Right cardiac atrium (tissue), 5 donors: ENCODE measurements at regions of chr10 and their contacts with region 1.

Region 1: DNA sequence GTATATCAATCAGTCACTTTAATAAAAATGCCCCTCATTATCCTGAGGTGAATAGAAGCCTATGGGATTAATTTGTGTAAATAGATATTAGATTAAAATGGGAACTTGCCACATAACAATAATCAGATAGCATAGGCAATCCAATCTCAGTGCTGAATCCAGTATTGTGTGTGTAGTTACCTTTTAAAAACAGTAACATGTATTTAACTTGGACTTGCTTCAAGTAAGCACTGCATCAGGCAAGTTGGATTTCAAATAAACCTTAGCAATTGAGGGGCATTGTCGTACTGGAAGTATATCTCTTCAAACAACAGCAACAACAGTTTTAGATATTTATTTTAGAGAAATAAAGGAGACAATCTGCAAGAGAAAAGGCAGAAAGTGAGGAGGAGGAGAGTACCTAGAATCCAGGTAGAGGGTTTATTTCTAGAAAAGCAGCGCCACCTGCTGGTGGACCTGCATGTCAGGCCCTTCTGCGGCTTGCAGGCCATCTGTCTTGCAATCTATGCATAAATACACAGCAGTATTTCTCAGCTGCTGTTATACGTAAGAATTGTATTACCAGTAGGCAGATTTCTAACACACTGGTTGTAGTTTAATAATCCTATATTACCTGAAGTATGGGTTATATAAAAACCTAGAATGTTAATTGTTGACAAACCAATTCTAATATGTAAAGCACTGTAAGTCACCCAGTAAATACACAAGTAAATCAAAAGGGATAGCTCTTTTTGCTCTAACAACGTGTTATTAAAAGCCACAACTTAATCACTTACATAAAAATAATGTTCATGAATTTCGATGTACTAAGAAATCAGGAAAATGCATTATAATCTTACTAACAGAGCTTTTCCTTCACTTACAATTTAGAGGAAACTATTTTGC is 652.8 kb downstream of the KCNMA1 start:
- DNase-seq: peak; percentile 50 to 82 (median 76)
- ATAC-seq: peak; percentile 71 to 75
- H3K4me3 ChIP-seq: no peak overlapping the region
- H3K27ac ChIP-seq: no peak overlapping the region
- H3K4me1 ChIP-seq: no peaks in the 10 kb centered on the region
- H3K27me3 ChIP-seq: no peaks in the 10 kb centered on the region

Region 2: GRCh38 chr10:76547352-76547972 is 437.3 kb before region 1 on chr10:
- intact Hi-C with region 1: loop called in 2 of 4 experiments (anchors 5 to 10 kb)
- DNase-seq: peak; percentile 73 to 89 (median 82)
- ATAC-seq: peak; percentile 22 to 73
- H3K4me3 ChIP-seq: no peak overlapping the region
- H3K27ac ChIP-seq: no peak overlapping the region
- H3K4me1 ChIP-seq: no peaks in the 10 kb centered on the region
- H3K27me3 ChIP-seq: no peaks in the 10 kb centered on the region

Region 3: DNA sequence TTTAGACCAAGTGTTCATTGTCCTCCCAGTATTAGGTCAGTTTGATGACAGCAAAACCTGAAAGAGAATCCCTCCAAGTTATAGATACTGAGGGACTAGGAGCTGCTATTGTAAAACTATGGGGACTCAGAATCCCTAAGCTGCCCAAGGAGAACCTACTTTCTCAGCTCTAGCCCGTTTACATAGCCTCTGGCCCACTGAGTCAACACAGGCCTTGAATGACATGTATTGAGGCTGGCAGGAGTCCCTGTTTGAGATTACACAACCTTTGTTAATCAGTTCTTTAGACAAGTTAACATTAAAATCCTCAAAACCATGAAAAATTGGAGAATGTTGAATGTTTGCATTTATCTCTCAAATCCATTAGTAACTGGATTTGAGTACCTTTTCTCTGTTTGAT is 426.2 kb before region 1 on chr10:
- intact Hi-C with region 1: loop called in 2 of 4 experiments (anchors 5 to 10 kb)
- DNase-seq: peak in 1 of 3 donors; percentile 32
- ATAC-seq: peak in 1 of 2 donors; percentile 37
- H3K4me3 ChIP-seq: no peak overlapping the region
- H3K27ac ChIP-seq: peak overlapping the region; percentile 31
- H3K4me1 ChIP-seq: peaks cover 6% of the 10 kb centered on the region
- H3K27me3 ChIP-seq: no peaks in the 10 kb centered on the region

Region 4: DNA sequence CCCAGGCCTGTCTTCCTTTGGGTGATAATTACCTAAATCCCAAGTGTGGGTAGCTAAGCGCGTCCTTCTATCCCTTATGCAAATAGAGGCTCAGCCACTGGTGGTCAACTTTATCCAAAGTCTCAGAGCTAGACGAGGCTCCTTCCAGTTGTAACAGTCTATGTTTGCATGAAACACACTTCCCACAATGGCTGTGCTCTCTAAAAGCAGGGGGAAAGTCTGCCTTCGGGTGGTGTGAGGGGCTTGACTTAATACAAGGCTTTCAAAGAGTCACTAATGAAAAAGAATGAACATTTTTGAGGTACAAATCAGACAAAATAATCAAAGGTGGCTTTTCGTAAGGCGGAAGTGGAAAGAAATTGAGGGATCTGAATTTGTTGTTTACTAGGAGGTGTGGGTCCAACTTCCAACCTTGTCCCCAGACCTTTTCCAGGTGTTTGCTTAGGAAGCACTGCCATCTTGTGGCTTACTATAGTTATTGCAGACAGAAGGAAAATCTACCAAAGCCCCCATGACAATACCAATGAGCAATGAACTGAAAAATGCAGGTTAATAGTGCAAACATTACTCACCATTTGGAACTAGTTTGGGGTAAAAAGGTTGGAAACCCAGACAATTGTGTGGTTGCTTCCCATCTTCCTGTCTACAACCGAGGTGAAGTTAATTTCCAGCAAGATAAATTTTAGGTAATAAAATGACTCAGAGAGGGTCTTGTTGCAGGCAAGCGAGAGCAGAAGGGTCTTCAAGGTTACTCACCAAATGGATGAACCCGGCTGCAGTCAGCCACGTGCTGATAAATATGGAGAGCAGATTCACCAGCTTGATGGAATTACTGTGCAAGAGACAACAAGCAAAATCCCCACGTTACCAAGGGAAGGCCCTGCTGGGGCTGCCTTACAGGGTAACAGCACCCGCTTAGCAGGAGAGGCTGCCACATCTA is 127.1 kb after region 1 on chr10:
- intact Hi-C with region 1: no loop called
- DNase-seq: no peak
- ATAC-seq: peak; percentile 50 to 57
- H3K4me3 ChIP-seq: no peak overlapping the region
- H3K27ac ChIP-seq: no peak overlapping the region
- H3K4me1 ChIP-seq: peaks cover under 1% of the 10 kb centered on the region
- H3K27me3 ChIP-seq: no peaks in the 10 kb centered on the region